Heart right ventricle (tissue), 16 donors: ENCODE measurements at regions of chr2 and their contacts with region 1.

Region 1: GRCh38 chr2:170873035-170873692 is 55.9 kb upstream of the GORASP2 start:
- DNase-seq: peak; percentile 61 to 62
- ATAC-seq: peak; percentile 73 to 93 (median 86)
- H3K4me3 ChIP-seq: peak overlapping the region in 4 of 10 donors; percentile 8 to 35 (median 30)
- H3K27ac ChIP-seq: no peak overlapping the region
- H3K4me1 ChIP-seq: peaks cover 0 to 4% (median 0%) of the 10 kb centered on the region in 9 donors
- H3K27me3 ChIP-seq: peaks cover 0 to 5% (median 0%) of the 10 kb centered on the region in 7 donors
- CTCF ChIP-seq: peak; percentile 72 to 94 (median 88)

Region 2: GRCh38 chr2:170361090-170361936 is 511.9 kb before region 1 on chr2:
- intact Hi-C with region 1: loop called in 1 of 10 experiments (anchors 10 kb)
- DNase-seq: peak in 1 of 2 donors; percentile 12
- ATAC-seq: peak in 1 of 8 donors; percentile 50
- H3K4me3 ChIP-seq: no peak overlapping the region
- H3K27ac ChIP-seq: no peak overlapping the region
- H3K4me1 ChIP-seq: no peaks in the 10 kb centered on the region
- H3K27me3 ChIP-seq: peaks cover 0 to 76% (median 50%) of the 10 kb centered on the region in 7 donors
- CTCF ChIP-seq: peak; percentile 18 to 71 (median 59)

Region 3: DNA sequence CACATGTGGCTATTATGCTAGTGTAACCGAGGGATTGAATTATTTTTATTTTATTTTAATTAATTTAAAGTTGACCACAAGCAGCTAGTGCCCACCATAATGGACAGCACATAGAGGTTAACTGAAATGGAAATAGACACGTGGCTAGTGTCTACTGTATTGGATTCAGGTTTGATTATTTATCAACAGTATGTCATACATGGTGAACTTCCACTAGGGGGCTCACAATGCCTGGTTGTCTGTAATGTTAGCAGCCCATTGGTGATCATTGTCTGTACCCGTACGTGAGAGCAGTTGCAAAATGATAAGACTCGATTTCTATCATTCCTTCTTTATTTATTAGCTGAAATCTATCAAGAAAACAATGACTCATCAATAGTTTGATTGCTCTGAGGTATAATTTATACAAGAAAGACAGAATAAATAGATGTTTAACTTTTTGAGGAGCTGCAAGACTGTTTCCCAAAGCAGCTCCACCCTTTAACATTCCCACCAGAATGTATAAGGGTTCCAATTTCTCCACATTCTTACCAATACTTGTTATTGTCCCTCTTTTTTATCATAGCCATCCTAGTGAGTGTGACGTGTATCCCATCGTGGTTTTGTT is 725.7 kb after region 1 on chr2:
- intact Hi-C with region 1: no loop called
- DNase-seq: peak in 1 of 2 donors; percentile 34
- ATAC-seq: peak in 7 of 8 donors; percentile 55 to 84 (median 67)
- H3K4me3 ChIP-seq: no peak overlapping the region
- H3K27ac ChIP-seq: no peak overlapping the region
- H3K4me1 ChIP-seq: peaks cover 0 to 4% (median 0%) of the 10 kb centered on the region in 9 donors
- H3K27me3 ChIP-seq: peaks cover 0 to 33% (median 6%) of the 10 kb centered on the region in 7 donors
- CTCF ChIP-seq: peak; percentile 49 to 81 (median 73)